ENCODE measurements at regions of chr14 and their contacts with region 1.

Region 1: GRCh38 chr14:60248697-60249318 is at the start of gene PPM1A:
- H3K4me3 ChIP-seq: peak within 1 kb of the TSS; percentile 83
- H3K27ac ChIP-seq: peak within 1 kb of the TSS; percentile 97
- H3K4me1 ChIP-seq: peaks cover 22% of the 10 kb centered on the region
- CTCF ChIP-seq: no peak

Region 2: GRCh38 chr14:60276342-60276741 is 27.5 kb after region 1 on chr14:
- CTCF ChIA-PET with region 1: no interaction called
- POLR2A ChIA-PET with region 1: interaction called, 14 read pairs
- H3K4me3 ChIP-seq: no peak overlapping the region
- H3K27ac ChIP-seq: no peak overlapping the region
- H3K4me1 ChIP-seq: peaks cover 4% of the 10 kb centered on the region
- CTCF ChIP-seq: no peak

Measured in HEK293 (cell line).